ENCODE measurements at regions of chr22 and their contacts with region 1.

Region 1: DNA sequence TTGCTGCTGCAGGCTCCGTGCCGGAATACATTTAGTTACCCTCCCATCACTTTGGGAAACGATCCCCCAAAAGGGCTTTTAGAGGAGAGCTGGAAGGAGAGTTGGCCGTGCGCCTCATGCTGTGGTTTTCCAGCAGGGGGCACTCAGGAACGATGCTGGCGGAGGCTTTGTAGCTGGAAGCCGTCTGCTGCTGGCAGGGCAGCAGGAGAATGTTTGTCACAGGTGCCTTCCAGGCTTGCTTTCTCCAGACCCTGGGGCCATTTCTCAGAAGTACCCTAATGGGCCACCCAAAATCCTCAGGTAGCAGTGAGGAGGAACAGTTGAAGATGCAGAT is 30.0 kb upstream of the CABP7 start:
- DNase-seq: peak; percentile 45 to 76 (median 59)
- ATAC-seq: peak in 3 of 4 donors; percentile 66 to 77 (median 74)
- H3K4me3 ChIP-seq: no peak overlapping the region
- H3K27ac ChIP-seq: no peak overlapping the region
- H3K4me1 ChIP-seq: peaks cover 0 to 4% (median 0%) of the 10 kb centered on the region in 12 donors
- H3K27me3 ChIP-seq: no peaks in the 10 kb centered on the region
- CTCF ChIP-seq: peak; percentile 51 to 78 (median 64)
- POLR2A ChIP-seq: no peak

Region 2: DNA sequence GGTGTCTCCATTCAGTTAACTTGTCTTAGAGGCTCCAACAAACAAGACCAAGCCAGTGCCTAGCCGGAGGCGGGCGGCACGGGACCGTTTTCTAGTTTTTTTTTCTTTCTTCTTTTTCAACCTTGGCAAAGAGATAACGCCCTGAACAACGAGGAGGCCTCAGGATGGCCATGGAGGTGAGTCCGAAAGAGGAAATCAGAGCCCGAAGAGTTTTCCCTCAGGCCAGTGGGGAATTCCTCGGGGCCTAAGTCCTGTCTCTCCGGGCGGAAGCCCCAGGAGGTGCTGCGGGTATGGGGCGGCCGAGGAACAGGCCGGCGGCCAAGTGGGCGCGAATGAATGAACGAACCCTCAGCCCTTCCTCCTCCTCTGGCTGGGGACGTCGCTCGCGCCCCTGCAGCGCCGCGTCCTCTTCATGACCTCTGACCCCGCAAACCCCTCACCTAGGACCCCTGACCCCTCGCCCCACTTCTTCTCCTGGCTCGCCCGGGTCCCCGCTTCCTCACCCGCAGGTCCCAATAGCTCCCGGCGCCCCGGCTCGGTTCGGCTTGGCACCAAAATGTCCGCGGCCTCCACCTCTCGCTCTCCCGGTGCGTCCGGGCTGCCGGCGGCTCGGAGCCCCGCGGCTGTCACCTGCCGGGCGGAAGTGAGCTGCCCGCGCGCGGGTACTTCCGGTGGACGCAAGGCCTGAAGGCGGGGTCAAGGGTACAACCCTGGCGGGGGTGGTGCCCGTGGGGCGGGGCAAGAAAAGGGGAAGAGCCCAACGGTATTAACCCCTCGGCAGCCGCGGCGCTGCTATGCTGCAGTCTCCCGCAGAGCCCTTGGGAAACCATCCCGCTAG is 301.7 kb before region 1 on chr22 and contains the start of gene AP1B1:
- intact Hi-C with region 1: no loop called
- DNase-seq: peak; percentile 94 to 97 (median 97)
- ATAC-seq: peak; percentile 95 to 98 (median 98)
- H3K4me3 ChIP-seq: peak within 1 kb of the TSS; percentile 73 to 90 (median 78)
- H3K27ac ChIP-seq: peak within 1 kb of the TSS; percentile 48 to 93 (median 86)
- H3K4me1 ChIP-seq: peaks cover 0 to 59% (median 23%) of the 10 kb centered on the region in 12 donors
- H3K27me3 ChIP-seq: no peaks in the 10 kb centered on the region
- CTCF ChIP-seq: peak in 2 of 12 donors; percentile 14 to 17
- POLR2A ChIP-seq: peak in 1 of 2 donors; percentile 58
- total RNA-seq, gene AP1B1: 30.3 to 74.8 (median 33.8) TPM

Region 3: GRCh38 chr22:30089655-30089974 is 399.8 kb after region 1 on chr22:
- intact Hi-C with region 1: loop called in 7 of 10 experiments (anchors 1 to 10 kb)
- DNase-seq: no peak
- ATAC-seq: no peak
- H3K4me3 ChIP-seq: no peak overlapping the region
- H3K27ac ChIP-seq: no peak overlapping the region
- H3K4me1 ChIP-seq: peaks cover 0 to 7% (median 0%) of the 10 kb centered on the region in 12 donors
- H3K27me3 ChIP-seq: peaks cover 0 to 18% (median 0%) of the 10 kb centered on the region in 9 donors
- CTCF ChIP-seq: no peak
- POLR2A ChIP-seq: no peak

Measured in heart left ventricle (tissue), 16 donors.